HAP-1 (cell line): ENCODE measurements at regions of chr5 and their contacts with region 1.

Region 1: GRCh38 chr5:36507332-36507952 is 99.0 kb upstream of the SLC1A3 start:
- DNase-seq: peak; percentile 40 to 85
- H3K4me3 ChIP-seq: no peak overlapping the region
- H3K4me1 ChIP-seq: no peaks in the 10 kb centered on the region
- H3K27me3 ChIP-seq: no peaks in the 10 kb centered on the region

Region 2: DNA sequence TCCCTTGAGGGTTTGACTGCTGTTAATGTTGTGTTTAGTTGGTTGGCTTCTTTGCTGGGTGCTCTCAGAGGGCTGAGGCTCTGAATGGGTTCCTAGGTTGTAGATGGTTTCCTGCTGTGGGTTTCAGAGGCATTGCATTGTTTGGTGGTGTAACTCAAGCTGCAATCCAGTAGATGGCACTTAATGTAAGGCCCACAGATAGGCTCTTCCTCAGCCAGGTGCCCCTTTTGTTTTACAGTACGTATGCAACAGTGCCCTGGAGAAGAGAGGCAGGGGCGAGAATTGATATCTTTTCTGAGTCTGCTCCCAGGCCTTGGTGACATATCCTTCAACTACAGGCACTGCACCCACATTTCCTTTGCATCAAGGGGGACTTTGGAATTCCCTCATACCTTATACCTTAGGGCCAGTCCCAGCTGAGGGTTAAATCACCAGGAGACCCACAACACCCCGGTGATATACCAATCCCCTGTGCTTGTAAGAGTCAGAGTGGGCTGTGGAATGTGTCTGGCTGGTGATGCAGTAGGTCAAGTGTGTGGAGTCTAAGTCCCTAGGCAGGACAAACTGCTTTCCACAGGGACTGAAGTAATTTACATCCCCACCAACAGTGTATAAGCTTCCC is 433.7 kb before region 1 on chr5:
- in situ Hi-C with region 1: loop called (anchors 25 kb)
- DNase-seq: peak; percentile 36 to 48
- H3K4me3 ChIP-seq: no peak overlapping the region
- H3K4me1 ChIP-seq: peaks cover 8% of the 10 kb centered on the region
- H3K27me3 ChIP-seq: no peaks in the 10 kb centered on the region; the same call in 1 of the 2 replicates

Region 3: GRCh38 chr5:36252722-36253365 is 254.6 kb before region 1 on chr5:
- in situ Hi-C with region 1: loop called (anchors 25 kb)
- DNase-seq: no peak
- H3K4me3 ChIP-seq: no peak overlapping the region
- H3K4me1 ChIP-seq: peaks cover 3% of the 10 kb centered on the region; the same call in 1 of the 2 replicates
- H3K27me3 ChIP-seq: no peaks in the 10 kb centered on the region

Region 4: DNA sequence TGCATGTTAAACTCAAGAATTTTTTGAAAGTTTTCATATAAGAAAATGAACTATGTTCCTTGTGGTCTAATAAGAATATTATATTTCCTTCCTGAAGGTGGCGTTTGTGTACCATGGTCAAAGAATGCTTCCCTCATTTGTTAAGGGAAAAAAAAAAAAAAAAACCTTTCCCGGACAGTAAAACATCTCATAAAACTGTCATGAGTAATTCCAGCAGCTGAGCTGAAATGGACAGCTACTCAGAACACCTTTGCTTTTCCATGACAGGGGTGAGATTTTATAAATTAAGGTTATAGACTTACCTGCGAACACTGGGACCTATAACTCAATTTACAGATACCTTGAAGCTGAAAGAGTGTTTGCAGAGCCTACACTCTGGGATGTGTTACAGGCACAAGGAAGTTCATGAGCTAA is 92.6 kb before region 1 on chr5:
- in situ Hi-C with region 1: loop called (anchors 5 kb)
- DNase-seq: peak; percentile 19 to 56
- H3K4me3 ChIP-seq: no peak overlapping the region
- H3K4me1 ChIP-seq: no peaks in the 10 kb centered on the region; the same call in 1 of the 2 replicates
- H3K27me3 ChIP-seq: peaks cover 6% of the 10 kb centered on the region; the same call in 1 of the 2 replicates

Region 5: GRCh38 chr5:36915653-36916052 is 408.2 kb after region 1 on chr5:
- in situ Hi-C with region 1: no loop called
- DNase-seq: no peak
- H3K4me3 ChIP-seq: no peak overlapping the region
- H3K4me1 ChIP-seq: peaks cover 9% of the 10 kb centered on the region
- H3K27me3 ChIP-seq: no peaks in the 10 kb centered on the region

Region 6: DNA sequence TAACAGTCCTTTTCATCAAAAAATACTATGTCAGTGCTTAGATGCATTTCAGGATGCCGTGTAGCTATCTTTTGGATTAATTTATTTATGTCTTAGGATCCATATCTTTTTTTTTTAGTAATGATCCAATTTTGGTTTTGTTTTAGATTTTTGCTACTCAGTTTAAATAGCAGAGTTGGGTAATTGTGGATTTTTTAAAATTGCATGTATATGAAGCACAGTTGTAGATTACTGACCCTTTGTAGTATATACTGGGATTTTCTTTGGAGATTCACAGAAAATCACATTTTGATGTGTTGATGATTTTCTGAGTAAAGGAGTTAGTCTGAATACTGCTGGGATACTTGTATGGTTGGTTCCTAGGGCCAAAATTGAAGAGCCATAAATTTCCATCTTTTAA is 481.0 kb after region 1 on chr5:
- in situ Hi-C with region 1: no loop called
- DNase-seq: no peak
- H3K4me3 ChIP-seq: no peak overlapping the region
- H3K4me1 ChIP-seq: peaks cover 8% of the 10 kb centered on the region
- H3K27me3 ChIP-seq: no peaks in the 10 kb centered on the region

Region 7: DNA sequence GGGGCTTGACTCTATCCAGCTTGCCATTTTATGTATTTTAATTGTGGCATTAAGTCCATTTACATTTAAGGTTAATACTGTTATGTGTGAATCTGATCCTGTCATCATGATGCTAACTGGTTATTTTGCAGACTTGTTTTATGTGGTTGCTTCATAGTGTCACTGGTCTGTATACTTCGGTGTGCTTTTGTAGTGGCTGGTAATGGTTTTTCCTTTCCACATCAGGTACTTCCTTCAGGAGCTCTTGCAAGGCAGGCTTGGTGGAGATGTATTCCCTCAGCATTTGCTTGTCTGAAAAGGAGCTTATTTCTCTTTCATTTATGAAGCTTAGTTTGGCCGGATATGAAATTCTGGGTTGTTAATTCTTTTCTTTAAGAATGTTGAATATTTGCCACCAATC is 595.9 kb after region 1 on chr5:
- in situ Hi-C with region 1: no loop called
- DNase-seq: no peak
- H3K4me3 ChIP-seq: no peak overlapping the region
- H3K4me1 ChIP-seq: no peaks in the 10 kb centered on the region
- H3K27me3 ChIP-seq: no peaks in the 10 kb centered on the region; the same call in 1 of the 2 replicates